ENCODE measurements at regions of chr1 and their contacts with region 1.

Region 1: DNA sequence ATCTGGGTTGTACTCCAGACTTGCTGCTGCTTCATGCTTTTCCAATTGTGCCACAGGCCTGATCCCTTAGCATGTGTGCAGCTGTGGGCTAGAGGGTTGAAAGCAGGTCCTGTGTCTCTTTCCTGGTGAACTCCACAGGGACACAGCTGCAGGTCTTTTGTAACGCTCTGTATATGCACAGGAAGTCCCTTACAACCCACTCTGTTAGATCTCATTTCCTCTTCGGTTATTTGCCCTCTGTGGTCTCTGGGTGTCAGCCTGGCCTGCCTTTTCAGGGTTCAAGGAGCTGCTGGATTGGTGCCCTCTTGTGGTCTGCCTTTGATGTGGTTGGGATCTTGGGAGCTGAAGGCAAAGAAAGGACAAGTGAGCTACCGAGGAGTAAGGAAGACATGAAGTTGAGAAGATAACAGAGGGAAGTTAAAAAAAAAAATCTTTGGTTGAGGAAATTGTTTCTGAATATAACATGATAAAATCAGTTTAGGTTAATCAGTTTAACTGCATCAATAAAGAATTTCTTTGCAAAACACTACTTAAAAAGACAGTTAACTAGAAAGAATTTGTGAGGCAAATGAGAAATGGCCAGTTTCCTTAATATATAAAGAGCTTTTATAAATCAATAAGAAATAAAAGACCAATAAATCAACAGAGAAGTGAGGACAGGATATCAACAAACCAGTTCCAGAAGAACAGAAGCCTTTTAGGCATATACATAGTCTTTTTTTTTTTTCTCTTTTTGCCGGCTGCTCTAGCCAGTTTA is 44.1 kb downstream of the UCK2 start:
- DNase-seq: peak; percentile 65
- H3K4me3 Mint-ChIP-seq: peak overlapping the region; percentile 66
- H3K27ac Mint-ChIP-seq: peak overlapping the region; percentile 81
- H3K4me1 Mint-ChIP-seq: peaks cover 62% of the 10 kb centered on the region
- H3K27me3 Mint-ChIP-seq: no peaks in the 10 kb centered on the region

Region 2: DNA sequence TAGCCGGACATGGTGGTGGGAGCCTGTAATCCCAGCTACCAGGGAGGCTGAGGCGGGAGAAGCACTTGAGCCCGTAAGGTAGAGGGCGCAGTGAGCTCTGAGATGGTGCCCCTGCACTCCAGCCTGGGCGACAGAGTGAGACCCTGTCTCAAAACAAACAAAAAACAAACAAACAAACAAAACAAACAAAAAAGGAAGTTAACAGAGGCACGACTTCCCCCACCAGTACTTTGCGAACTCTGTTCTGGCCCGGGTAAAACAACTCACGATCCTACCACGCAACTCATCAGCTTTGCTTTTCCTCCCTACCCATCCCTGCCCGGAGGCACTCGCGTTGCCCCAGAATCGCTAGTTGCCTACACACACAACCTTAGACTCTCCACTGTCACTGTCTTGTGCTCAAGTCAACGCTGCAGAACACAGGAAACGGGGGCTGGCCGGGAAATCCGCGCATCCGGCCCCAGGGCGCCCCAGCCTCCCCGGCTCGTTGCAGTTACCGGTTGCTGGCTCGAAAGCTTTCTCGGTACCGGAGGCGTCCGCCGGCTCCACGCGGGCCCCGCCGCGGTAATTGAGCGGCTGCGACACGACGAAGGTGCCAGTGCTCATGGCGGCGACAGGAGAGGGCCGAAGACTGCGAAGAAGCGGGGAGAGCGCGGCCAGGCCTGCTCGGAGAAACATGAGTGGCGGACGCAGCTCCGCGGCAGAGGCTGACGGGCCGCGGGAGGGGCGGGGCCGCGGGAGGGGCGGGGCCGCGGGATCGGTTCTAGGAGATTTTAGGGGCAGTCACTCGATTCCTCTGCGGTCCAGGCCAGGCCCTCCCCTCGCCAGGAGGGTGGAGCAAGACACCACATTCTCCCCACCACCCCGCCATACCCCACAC is 173.4 kb before region 1 on chr1 and contains the start of gene ALDH9A1:
- intact Hi-C with region 1: loop called (anchors 5 kb)
- DNase-seq: peak; percentile 84
- H3K4me3 Mint-ChIP-seq: peak within 1 kb of the TSS; percentile 100
- H3K27ac Mint-ChIP-seq: peak within 1 kb of the TSS; percentile 99
- H3K4me1 Mint-ChIP-seq: peaks cover 18% of the 10 kb centered on the region
- H3K27me3 Mint-ChIP-seq: peaks cover 3% of the 10 kb centered on the region
- total RNA-seq, gene ALDH9A1: 43.3 and 47.4 TPM in 2 replicates

Region 3: GRCh38 chr1:165842671-165843129 is 28.8 kb before region 1 on chr1:
- intact Hi-C with region 1: loop called (anchors 2 kb)
- DNase-seq: peak; percentile 21
- H3K4me3 Mint-ChIP-seq: peak overlapping the region; percentile 58
- H3K27ac Mint-ChIP-seq: peak overlapping the region; percentile 67
- H3K4me1 Mint-ChIP-seq: peaks cover 74% of the 10 kb centered on the region
- H3K27me3 Mint-ChIP-seq: no peaks in the 10 kb centered on the region